Motor neuron (in vitro differentiated cells): ENCODE measurements at regions of chr7 and their contacts with region 1.

Region 1: DNA sequence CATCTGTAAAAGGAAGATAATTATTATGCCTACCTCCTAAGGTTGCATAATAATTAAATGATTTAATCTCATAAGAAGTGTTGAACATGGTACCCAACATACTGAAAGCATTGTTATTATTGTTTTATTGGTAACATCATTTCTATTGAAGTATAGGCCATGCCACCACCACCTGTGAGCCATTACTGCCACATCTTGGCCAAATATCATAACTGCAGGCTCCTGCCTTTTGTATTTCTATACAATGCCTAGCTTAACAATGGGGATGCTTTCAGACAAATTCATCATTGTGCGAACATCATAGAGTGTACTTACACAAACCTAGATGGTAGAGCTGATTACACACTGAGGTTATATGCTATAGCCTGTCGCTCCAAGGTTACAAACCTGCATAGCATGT is 61.1 kb upstream of the NPSR1 start:
- ATAC-seq: peak in 3 of 8 experiments; percentile 58 to 76 (median 72)
- H3K4me3 ChIP-seq: no peak overlapping the region
- H3K27ac ChIP-seq: no peak overlapping the region
- H3K4me1 ChIP-seq: no peaks in the 10 kb centered on the region

Region 2: GRCh38 chr7:34341316-34341715 is 255.6 kb before region 1 on chr7:
- in situ Hi-C with region 1: loop called in 1 of 9 experiments (anchors 25 kb)
- ATAC-seq: peak in 1 of 8 experiments; percentile 43
- H3K4me3 ChIP-seq: no peak overlapping the region
- H3K27ac ChIP-seq: no peak overlapping the region
- H3K4me1 ChIP-seq: no peaks in the 10 kb centered on the region

Region 3: DNA sequence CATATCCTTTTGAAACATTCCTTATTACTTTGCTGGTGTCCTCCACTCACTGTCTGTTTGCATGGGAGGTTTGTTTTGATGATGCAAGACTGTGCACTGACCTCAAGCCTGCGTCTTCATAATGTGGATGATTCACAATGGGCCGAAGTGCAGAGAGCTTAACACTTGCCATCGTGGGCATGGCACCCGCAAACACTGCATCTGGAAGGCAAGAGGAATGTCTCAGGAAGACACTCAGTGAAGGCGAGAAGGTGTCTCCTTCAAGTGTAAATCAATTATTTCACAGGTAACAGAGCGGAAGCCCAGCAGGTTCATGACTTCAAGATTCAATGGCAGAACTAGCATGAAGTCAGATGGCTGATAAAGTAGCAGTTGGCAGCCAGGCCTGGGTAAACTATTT is 342.3 kb after region 1 on chr7:
- in situ Hi-C with region 1: no loop called
- ATAC-seq: peak in 2 of 8 experiments; percentile 71 to 88
- H3K4me3 ChIP-seq: no peak overlapping the region
- H3K27ac ChIP-seq: no peak overlapping the region
- H3K4me1 ChIP-seq: no peaks in the 10 kb centered on the region